Aorta (tissue), 5 donors: ENCODE measurements at regions of chr12 and their contacts with region 1.

Region 1: DNA sequence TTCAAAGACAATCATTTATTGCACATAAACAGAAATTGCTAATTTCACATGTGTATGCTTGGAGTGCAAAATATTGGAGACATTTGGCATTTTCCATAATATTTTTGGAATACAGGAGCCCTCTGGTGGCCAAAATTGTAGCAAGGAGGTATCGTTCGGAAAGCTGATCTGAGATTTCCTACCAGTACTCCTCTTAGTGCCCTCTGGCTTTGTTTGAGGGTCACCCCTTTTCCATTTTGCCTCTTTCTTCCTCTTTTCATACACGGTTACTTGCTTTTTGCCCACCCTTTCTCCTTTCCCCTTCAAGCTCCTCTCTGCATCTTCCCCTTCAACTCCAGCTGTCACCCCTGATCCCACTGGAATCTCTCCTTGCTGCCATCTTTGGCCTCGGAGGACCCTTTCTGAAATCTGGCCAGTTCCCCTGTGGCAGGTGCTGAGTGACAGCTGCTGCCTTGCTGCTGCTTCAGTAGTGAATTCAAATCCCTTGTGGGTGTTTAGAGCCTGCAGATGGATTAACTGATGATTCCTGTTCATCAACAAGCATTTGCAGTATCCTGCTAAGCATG is 164.6 kb upstream of the PARP11 start:
- DNase-seq: no peak
- ATAC-seq: no peak
- H3K4me3 ChIP-seq: no peak overlapping the region
- H3K27ac ChIP-seq: no peak overlapping the region
- H3K4me1 ChIP-seq: no peaks in the 10 kb centered on the region
- H3K27me3 ChIP-seq: no peaks in the 10 kb centered on the region

Region 2: GRCh38 chr12:3863756-3864329 is 174.0 kb before region 1 on chr12:
- intact Hi-C with region 1: no loop called
- DNase-seq: no peak
- ATAC-seq: no peak
- H3K4me3 ChIP-seq: no peak overlapping the region
- H3K27ac ChIP-seq: no peak overlapping the region
- H3K4me1 ChIP-seq: no peaks in the 10 kb centered on the region
- H3K27me3 ChIP-seq: no peaks in the 10 kb centered on the region

Region 3: DNA sequence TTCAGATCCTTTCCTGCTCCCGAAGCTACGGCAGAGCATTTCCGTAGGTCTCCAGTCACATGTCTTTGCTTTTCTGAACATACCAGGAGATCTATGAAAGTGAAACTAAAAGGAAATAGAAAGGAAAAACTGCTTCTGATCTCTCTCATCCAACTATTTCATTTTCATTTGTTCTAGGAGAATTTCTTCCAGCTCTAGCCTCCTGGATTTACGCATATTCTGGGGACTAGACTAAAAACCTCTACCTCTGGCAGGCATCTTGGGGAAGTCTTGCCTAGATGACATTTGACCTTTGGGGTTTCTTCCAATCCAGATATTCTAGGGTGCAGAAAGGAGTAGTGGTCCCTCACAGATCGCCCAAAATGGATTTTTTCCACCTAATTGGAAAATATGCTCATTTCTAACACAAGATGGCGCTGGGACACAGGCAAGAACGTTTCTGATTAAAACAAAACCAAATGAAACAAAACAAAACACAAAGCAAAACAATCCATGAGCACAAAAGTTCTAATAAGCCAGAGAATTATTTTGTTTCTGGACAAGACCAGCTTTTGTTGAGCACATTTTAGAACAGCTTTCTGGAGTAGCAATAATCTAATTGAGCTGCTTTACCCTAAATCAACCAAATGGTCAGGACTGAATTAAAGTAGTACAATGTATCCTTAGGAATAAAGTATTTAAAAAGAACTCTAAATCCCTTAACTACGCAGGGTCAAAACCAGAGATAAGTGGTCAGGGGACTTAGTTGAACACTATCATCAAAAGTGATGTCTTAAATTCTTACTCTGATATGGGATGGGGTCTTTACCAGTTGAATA is 152.3 kb before region 1 on chr12:
- intact Hi-C with region 1: loop called (anchors 2 to 5 kb)
- DNase-seq: no peak
- ATAC-seq: peak; percentile 83
- H3K4me3 ChIP-seq: peak overlapping the region; percentile 70 to 94
- H3K27ac ChIP-seq: peak overlapping the region; percentile 48 to 93
- H3K4me1 ChIP-seq: no peaks in the 10 kb centered on the region
- H3K27me3 ChIP-seq: no peaks in the 10 kb centered on the region

Region 4: GRCh38 chr12:3996348-3996747 is 41.5 kb before region 1 on chr12:
- intact Hi-C with region 1: loop called (anchors 2 kb)
- DNase-seq: no peak
- ATAC-seq: no peak
- H3K4me3 ChIP-seq: no peak overlapping the region
- H3K27ac ChIP-seq: no peak overlapping the region
- H3K4me1 ChIP-seq: no peaks in the 10 kb centered on the region
- H3K27me3 ChIP-seq: peaks cover 0 to 2% of the 10 kb centered on the region in 2 donors